Activated CD8-positive, alpha-beta memory T cell treated with anti-CD3 and anti-CD28 coated beads, Interleukin-2, amount 10 ng/mL, durations not matched to agents 7 days and 5 days (primary cell): ENCODE measurements at regions of chrX and their contacts with region 1.

Region 1: DNA sequence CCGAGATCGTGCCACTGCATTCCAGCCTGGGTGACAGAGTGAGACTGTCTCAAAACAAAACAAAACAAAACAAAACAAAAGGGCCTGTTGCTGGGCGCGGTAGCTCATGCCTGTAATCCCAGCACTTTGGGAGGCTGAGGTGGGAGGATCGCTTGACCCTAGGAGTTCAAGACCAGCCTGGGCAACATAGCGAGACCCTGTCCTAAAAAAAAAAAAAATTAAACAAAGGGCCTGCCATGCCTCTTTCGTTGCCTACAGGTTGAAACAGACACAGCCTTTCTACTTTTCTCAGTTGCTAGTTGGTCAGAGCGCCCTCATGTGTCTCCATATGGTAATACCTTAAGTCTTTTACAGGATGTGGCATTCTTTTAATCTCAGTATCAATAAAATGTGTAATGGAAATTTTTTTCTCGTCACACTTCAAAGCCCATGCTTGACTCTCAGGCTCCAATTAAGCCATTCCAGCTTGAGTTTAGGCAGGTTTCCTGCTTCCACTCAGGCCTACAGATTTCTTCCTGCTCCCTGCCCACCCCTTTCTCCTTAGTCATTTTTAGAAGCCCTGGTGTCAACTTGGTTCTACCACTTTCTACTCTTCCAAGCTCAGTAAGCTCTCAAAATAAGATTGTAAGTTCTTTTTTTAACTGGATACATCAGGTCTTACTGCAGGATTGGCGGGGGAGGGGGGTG is 4.7 kb upstream of the SOWAHD start:
- DNase-seq: peak; percentile 67
- ATAC-seq: peak; percentile 28
- H3K4me3 Mint-ChIP-seq: no peak overlapping the region
- H3K27ac Mint-ChIP-seq: peak overlapping the region; percentile 98
- H3K4me1 Mint-ChIP-seq: peaks cover 46% of the 10 kb centered on the region
- H3K27me3 Mint-ChIP-seq: no peaks in the 10 kb centered on the region

Region 2: GRCh38 chrX:119775517-119776238 is 22.0 kb after region 1 on chrX:
- CTCF ChIA-PET with region 1: interaction called, 37 read pairs
- DNase-seq: no peak
- ATAC-seq: peak; percentile 59
- H3K4me3 Mint-ChIP-seq: peak overlapping the region; percentile 21
- H3K27ac Mint-ChIP-seq: peak overlapping the region; percentile 63
- H3K4me1 Mint-ChIP-seq: peaks cover 16% of the 10 kb centered on the region
- H3K27me3 Mint-ChIP-seq: no peaks in the 10 kb centered on the region

Region 3: DNA sequence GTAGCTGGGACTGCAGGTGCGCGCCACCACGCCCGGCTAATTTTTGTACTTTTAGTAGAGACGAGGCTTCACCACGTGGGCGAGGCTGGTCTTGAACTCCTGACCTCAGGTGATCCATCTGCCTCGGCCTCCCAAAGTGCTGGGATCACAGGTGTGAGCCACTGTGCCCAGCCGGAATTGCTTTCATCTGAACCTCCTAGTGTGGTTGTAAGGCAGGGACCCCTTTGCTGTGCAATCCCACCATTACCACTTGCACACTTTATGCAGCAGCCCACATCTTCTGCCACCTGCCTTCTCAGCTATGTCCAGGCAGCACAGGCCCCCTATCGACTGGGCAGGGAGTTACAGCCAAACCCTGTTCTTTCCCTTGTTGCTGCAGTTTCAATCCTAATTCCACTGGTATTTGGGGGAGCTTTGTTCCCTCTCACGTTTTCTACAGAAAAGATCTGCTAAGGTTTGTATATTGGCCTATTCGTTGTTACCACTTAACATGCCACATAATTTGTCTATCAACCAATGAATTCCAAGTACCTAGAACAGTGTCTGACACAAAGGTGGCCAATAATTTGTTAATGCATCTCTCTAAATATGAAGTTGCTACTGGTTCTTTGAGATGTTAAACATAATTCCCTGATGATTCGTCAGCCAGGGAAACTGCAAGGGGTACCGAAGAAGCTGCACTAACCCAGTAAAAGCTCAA is 31.2 kb after region 1 on chrX:
- CTCF ChIA-PET with region 1: interaction called, 31 read pairs
- DNase-seq: peak; percentile 68
- ATAC-seq: peak; percentile 43
- H3K4me3 Mint-ChIP-seq: no peak overlapping the region
- H3K27ac Mint-ChIP-seq: peak overlapping the region; percentile 70
- H3K4me1 Mint-ChIP-seq: peaks cover 51% of the 10 kb centered on the region
- H3K27me3 Mint-ChIP-seq: no peaks in the 10 kb centered on the region